Tibial artery (tissue), 4 donors: ENCODE measurements at regions of chr22 and their contacts with region 1.

Region 1: GRCh38 chr22:41301105-41302020 is at the start of gene ZC3H7B:
- DNase-seq: peak; percentile 82 to 87
- H3K4me3 ChIP-seq: peak within 1 kb of the TSS; percentile 81 to 87
- H3K27ac ChIP-seq: peak within 1 kb of the TSS; percentile 80 to 83
- H3K4me1 ChIP-seq: peaks cover 0 to 29% (median 14%) of the 10 kb centered on the region in 4 donors
- H3K27me3 ChIP-seq: no peaks in the 10 kb centered on the region
- CTCF ChIP-seq: peak; percentile 41 to 64

Region 2: GRCh38 chr22:41367039-41367679 is 65.8 kb after region 1 on chr22:
- intact Hi-C with region 1: loop called (anchors 10 kb)
- DNase-seq: peak; percentile 95 to 99
- H3K4me3 ChIP-seq: peak overlapping the region; percentile 47 to 60
- H3K27ac ChIP-seq: peak overlapping the region; percentile 62 to 74
- H3K4me1 ChIP-seq: peaks cover 0 to 49% (median 24%) of the 10 kb centered on the region in 4 donors
- H3K27me3 ChIP-seq: no peaks in the 10 kb centered on the region
- CTCF ChIP-seq: peak; percentile 38 to 40

Region 3: DNA sequence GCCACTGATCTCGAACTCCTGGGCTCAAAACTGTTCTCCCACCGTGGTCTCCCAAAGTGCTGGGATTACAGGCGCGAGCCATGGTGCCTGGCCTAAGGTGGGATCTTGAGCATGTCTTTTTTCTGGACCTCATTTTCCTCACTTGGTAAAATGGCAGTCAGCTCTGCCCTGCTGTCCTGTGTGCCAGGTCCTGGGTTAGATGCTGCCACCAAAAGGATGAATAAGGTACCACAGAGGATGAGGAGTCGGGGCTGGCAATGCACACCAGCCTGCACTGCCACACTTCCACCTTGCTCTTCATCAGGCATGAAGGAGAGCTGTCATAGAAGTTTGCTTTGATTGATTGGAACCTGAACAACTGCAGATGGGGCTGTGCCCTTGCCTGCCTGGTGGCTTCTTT is 199.8 kb after region 1 on chr22:
- intact Hi-C with region 1: no loop called
- DNase-seq: no peak
- H3K4me3 ChIP-seq: no peak overlapping the region
- H3K27ac ChIP-seq: no peak overlapping the region
- H3K4me1 ChIP-seq: peaks cover 0 to 38% (median 23%) of the 10 kb centered on the region in 4 donors
- H3K27me3 ChIP-seq: no peaks in the 10 kb centered on the region
- CTCF ChIP-seq: no peak